ENCODE measurements at regions of chr3 and their contacts with region 1.

Region 1: GRCh38 chr3:180912304-180913296 is at the start of gene FXR1:
- DNase-seq: peak; percentile 88 to 94 (median 91)
- ATAC-seq: peak; percentile 98 to 100 (median 99)
- H3K4me3 ChIP-seq: peak within 1 kb of the TSS; percentile 66 to 97 (median 92)
- H3K27ac ChIP-seq: peak within 1 kb of the TSS; percentile 81 to 97 (median 93)
- H3K4me1 ChIP-seq: peaks cover 0 to 50% (median 27%) of the 10 kb centered on the region in 12 donors
- H3K27me3 ChIP-seq: no peaks in the 10 kb centered on the region
- CTCF ChIP-seq: peak; percentile 45 to 92 (median 80)
- POLR2A ChIP-seq: peak in 1 of 2 donors; percentile 65
- total RNA-seq, gene FXR1: 184 to 298 (median 255) TPM

Region 2: GRCh38 chr3:180870008-180870699 is 42.4 kb before region 1 on chr3:
- intact Hi-C with region 1: loop called in 1 of 10 experiments (anchors 5 kb)
- DNase-seq: peak in 4 of 5 donors; percentile 12 to 66 (median 36)
- ATAC-seq: peak in 3 of 4 donors; percentile 60 to 71 (median 62)
- H3K4me3 ChIP-seq: peak overlapping the region in 10 of 12 donors; percentile 31 to 63 (median 50)
- H3K27ac ChIP-seq: peak overlapping the region in 6 of 12 donors; percentile 22 to 54 (median 40)
- H3K4me1 ChIP-seq: peaks cover 0 to 18% (median 7%) of the 10 kb centered on the region in 12 donors
- H3K27me3 ChIP-seq: no peaks in the 10 kb centered on the region
- CTCF ChIP-seq: peak in 1 of 12 donors; percentile 10
- POLR2A ChIP-seq: no peak

Region 3: GRCh38 chr3:180973543-180973942 is 60.9 kb after region 1 on chr3:
- intact Hi-C with region 1: loop called in 1 of 10 experiments (anchors 10 kb)
- DNase-seq: no peak
- ATAC-seq: no peak
- H3K4me3 ChIP-seq: no peak overlapping the region
- H3K27ac ChIP-seq: no peak overlapping the region
- H3K4me1 ChIP-seq: peaks cover 0 to 3% (median 0%) of the 10 kb centered on the region in 12 donors
- H3K27me3 ChIP-seq: no peaks in the 10 kb centered on the region
- CTCF ChIP-seq: no peak
- POLR2A ChIP-seq: no peak

Region 4: GRCh38 chr3:180989291-180990163 is 76.9 kb after region 1 on chr3 and contains the start of gene DNAJC19:
- intact Hi-C with region 1: loop called in 6 of 10 experiments (anchors 2 to 10 kb)
- DNase-seq: peak; percentile 91 to 95 (median 93)
- ATAC-seq: peak; percentile 98 to 99 (median 99)
- H3K4me3 ChIP-seq: peak within 1 kb of the TSS; percentile 38 to 94 (median 82)
- H3K27ac ChIP-seq: peak within 1 kb of the TSS; percentile 66 to 92 (median 84)
- H3K4me1 ChIP-seq: peaks cover 0 to 29% (median 17%) of the 10 kb centered on the region in 12 donors
- H3K27me3 ChIP-seq: no peaks in the 10 kb centered on the region
- CTCF ChIP-seq: no peak
- POLR2A ChIP-seq: peak in 1 of 2 donors; percentile 79
- total RNA-seq, gene DNAJC19: 51.7 to 122 (median 85.6) TPM